Caco-2 (cell line): ENCODE measurements at regions of chr1 and their contacts with region 1.

Region 1: DNA sequence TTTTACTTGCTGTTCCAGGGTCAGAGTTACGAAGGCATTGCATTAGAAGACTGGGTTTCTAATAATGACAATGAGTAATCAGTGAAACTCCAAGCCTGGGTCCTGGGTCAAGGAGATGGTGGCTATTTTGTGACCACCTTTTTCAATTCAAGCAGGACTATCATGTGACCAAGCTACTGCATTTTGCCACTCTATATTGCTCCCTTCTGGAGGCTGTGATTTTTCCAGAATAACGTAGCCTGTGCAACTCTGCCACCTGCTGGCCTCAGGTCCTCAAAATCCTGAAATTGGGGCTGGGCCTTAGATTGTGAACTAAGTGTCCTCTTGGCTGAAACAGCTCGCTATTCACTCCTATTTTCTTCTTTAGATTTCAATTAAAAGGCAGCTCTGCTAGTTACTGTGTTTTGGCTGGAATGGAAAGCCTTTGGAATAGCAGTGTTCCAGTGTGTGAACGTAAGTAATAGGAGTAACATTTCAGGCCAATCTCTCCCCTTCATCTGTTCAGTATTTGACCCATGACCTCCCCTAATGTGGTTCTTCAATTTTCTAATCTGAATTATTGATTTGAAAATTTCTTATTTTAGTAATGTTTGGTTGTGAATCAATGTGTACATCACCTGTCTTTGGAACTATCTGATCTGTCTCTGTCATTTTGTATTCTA is 52.9 kb upstream of the CD46 start:
- DNase-seq: peak; percentile 59 to 74
- H3K4me3 ChIP-seq: no peak overlapping the region
- H3K4me3 Mint-ChIP-seq: no peak overlapping the region
- H3K27ac Mint-ChIP-seq: no peak overlapping the region
- H3K4me1 ChIP-seq: no peaks in the 10 kb centered on the region
- H3K4me1 Mint-ChIP-seq: no peaks in the 10 kb centered on the region
- H3K27me3 ChIP-seq: no peaks in the 10 kb centered on the region; the same call in 1 of the 2 replicates
- H3K27me3 Mint-ChIP-seq: no peaks in the 10 kb centered on the region
- CTCF ChIP-seq: peak; percentile 70 to 77

Region 2: GRCh38 chr1:207579436-207579799 is 119.5 kb before region 1 on chr1:
- CTCF ChIA-PET with region 1: interaction called, 6 read pairs
- POLR2A ChIA-PET with region 1: no interaction called
- intact Hi-C with region 1: loop called (anchors 1 kb)
- DNase-seq: peak; percentile 64 to 71
- H3K4me3 ChIP-seq: no peak overlapping the region
- H3K4me3 Mint-ChIP-seq: no peak overlapping the region
- H3K27ac Mint-ChIP-seq: no peak overlapping the region
- H3K4me1 ChIP-seq: no peaks in the 10 kb centered on the region
- H3K4me1 Mint-ChIP-seq: no peaks in the 10 kb centered on the region
- H3K27me3 ChIP-seq: no peaks in the 10 kb centered on the region; the same call in 1 of the 2 replicates
- H3K27me3 Mint-ChIP-seq: peaks cover 12% of the 10 kb centered on the region
- CTCF ChIP-seq: peak; percentile 67 to 73

Region 3: GRCh38 chr1:207619871-207620542 is 78.9 kb before region 1 on chr1:
- CTCF ChIA-PET with region 1: interaction called, 16 read pairs
- POLR2A ChIA-PET with region 1: no interaction called
- intact Hi-C with region 1: no loop called
- DNase-seq: peak in 1 of 2 experiments; percentile 36
- H3K4me3 ChIP-seq: no peak overlapping the region
- H3K4me3 Mint-ChIP-seq: no peak overlapping the region
- H3K27ac Mint-ChIP-seq: no peak overlapping the region
- H3K4me1 ChIP-seq: no peaks in the 10 kb centered on the region
- H3K4me1 Mint-ChIP-seq: no peaks in the 10 kb centered on the region
- H3K27me3 ChIP-seq: no peaks in the 10 kb centered on the region
- H3K27me3 Mint-ChIP-seq: peaks cover 8% of the 10 kb centered on the region
- CTCF ChIP-seq: peak; percentile 69 to 83

Region 4: GRCh38 chr1:207631137-207631536 is 67.8 kb before region 1 on chr1:
- CTCF ChIA-PET with region 1: no interaction called
- POLR2A ChIA-PET with region 1: no interaction called
- intact Hi-C with region 1: no loop called
- DNase-seq: no peak
- H3K4me3 ChIP-seq: no peak overlapping the region
- H3K4me3 Mint-ChIP-seq: no peak overlapping the region
- H3K27ac Mint-ChIP-seq: no peak overlapping the region
- H3K4me1 ChIP-seq: no peaks in the 10 kb centered on the region
- H3K4me1 Mint-ChIP-seq: peaks cover 16% of the 10 kb centered on the region
- H3K27me3 ChIP-seq: no peaks in the 10 kb centered on the region
- H3K27me3 Mint-ChIP-seq: peaks cover 18% of the 10 kb centered on the region
- CTCF ChIP-seq: no peak

Region 5: GRCh38 chr1:207654320-207654719 is 44.6 kb before region 1 on chr1:
- CTCF ChIA-PET with region 1: interaction called, 8 read pairs
- POLR2A ChIA-PET with region 1: no interaction called
- intact Hi-C with region 1: loop called (anchors 2 kb)
- DNase-seq: no peak
- H3K4me3 ChIP-seq: no peak overlapping the region
- H3K4me3 Mint-ChIP-seq: no peak overlapping the region
- H3K27ac Mint-ChIP-seq: no peak overlapping the region
- H3K4me1 ChIP-seq: no peaks in the 10 kb centered on the region
- H3K4me1 Mint-ChIP-seq: no peaks in the 10 kb centered on the region
- H3K27me3 ChIP-seq: no peaks in the 10 kb centered on the region
- H3K27me3 Mint-ChIP-seq: peaks cover 6% of the 10 kb centered on the region
- CTCF ChIP-seq: no peak

Region 6: GRCh38 chr1:207797229-207797961 is 98.4 kb after region 1 on chr1:
- CTCF ChIA-PET with region 1: interaction called, 17 read pairs
- POLR2A ChIA-PET with region 1: no interaction called
- intact Hi-C with region 1: loop called (anchors 1 kb)
- DNase-seq: peak; percentile 81 to 83
- H3K4me3 ChIP-seq: no peak overlapping the region
- H3K4me3 Mint-ChIP-seq: no peak overlapping the region
- H3K27ac Mint-ChIP-seq: no peak overlapping the region
- H3K4me1 ChIP-seq: peaks cover 9% of the 10 kb centered on the region; the same call in 1 of the 2 replicates
- H3K4me1 Mint-ChIP-seq: peaks cover 17% of the 10 kb centered on the region
- H3K27me3 ChIP-seq: no peaks in the 10 kb centered on the region
- H3K27me3 Mint-ChIP-seq: no peaks in the 10 kb centered on the region
- CTCF ChIP-seq: peak; percentile 65 to 80